Dendritic cell treated with granulocyte-macrophage colony-stimulating factor and Interleukin-4, amounts not matched to agents 40 ng/mL and 50 ng/mL, for 4 days (primary cell): ENCODE measurements at regions of chr3 and their contacts with region 1.

Region 1: DNA sequence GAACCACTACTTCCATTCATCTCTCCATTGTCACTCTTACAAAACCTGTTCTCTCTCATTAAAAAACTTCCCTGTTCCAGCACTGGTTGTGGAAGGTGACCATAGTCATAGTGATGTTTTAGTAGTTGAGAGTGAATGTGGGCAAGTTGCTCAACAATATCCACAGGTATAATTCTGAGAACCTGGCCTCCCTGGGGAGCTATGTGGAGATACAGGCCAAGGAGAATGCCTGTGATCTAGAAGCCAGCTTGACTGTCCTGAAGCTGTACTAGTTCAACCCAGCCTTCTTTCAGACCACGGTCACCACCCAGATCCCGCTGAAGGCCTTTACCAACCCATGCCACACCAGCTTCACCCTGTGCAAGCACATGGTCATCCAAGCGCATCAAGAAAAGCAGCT is 61.1 kb upstream of the THRB start:
- H3K4me3 Mint-ChIP-seq: no peak overlapping the region
- H3K27ac Mint-ChIP-seq: no peak overlapping the region
- H3K4me1 Mint-ChIP-seq: no peaks in the 10 kb centered on the region
- H3K27me3 Mint-ChIP-seq: no peaks in the 10 kb centered on the region

Region 2: GRCh38 chr3:24818055-24818454 is 262.3 kb after region 1 on chr3:
- intact Hi-C with region 1: no loop called
- H3K4me3 Mint-ChIP-seq: no peak overlapping the region
- H3K27ac Mint-ChIP-seq: no peak overlapping the region
- H3K4me1 Mint-ChIP-seq: no peaks in the 10 kb centered on the region
- H3K27me3 Mint-ChIP-seq: no peaks in the 10 kb centered on the region

Region 3: DNA sequence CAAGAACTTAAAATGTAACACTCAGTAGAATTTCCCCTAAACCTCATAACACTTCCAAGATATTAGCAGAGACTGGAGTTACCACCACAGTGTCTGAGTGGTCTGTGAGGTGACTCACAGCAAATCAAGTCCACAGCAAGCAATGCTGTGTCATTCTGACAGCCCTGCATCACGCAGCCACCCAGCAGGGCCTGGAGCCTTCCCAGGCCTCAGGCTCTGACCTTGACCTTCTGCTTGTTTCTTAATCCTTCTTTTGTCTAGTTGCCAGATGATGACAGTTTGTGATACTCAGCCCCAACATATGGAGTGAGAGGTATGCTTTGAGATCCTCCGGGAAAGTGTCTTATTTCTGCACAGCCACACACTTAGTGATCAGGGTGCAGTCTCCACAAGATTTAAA is 1026.5 kb after region 1 on chr3:
- intact Hi-C with region 1: loop called (anchors 5 kb)
- H3K4me3 Mint-ChIP-seq: no peak overlapping the region
- H3K27ac Mint-ChIP-seq: no peak overlapping the region
- H3K4me1 Mint-ChIP-seq: peaks cover 10% of the 10 kb centered on the region
- H3K27me3 Mint-ChIP-seq: peaks cover 2% of the 10 kb centered on the region